ENCODE measurements at regions of chr17 and their contacts with region 1.

Region 1: GRCh38 chr17:45096141-45096540 is 35.0 kb downstream of the NMT1 start:
- DNase-seq: peak; percentile 61
- ATAC-seq: no peak
- H3K4me3 ChIP-seq: no peak overlapping the region
- H3K27ac ChIP-seq: no peak overlapping the region
- H3K4me1 ChIP-seq: peaks cover 21% of the 10 kb centered on the region
- H3K27me3 ChIP-seq: no peaks in the 10 kb centered on the region
- CTCF ChIP-seq: peak; percentile 87

Region 2: GRCh38 chr17:45051060-45051719 is 45.0 kb before region 1 on chr17 and contains the start of gene DCAKD:
- CTCF ChIA-PET with region 1: no interaction called
- POLR2A ChIA-PET with region 1: no interaction called
- intact Hi-C with region 1: loop called (anchors 5 kb)
- DNase-seq: peak; percentile 99
- ATAC-seq: peak; percentile 98
- H3K4me3 ChIP-seq: peak within 1 kb of the TSS; percentile 84
- H3K27ac ChIP-seq: peak within 1 kb of the TSS; percentile 92
- H3K4me1 ChIP-seq: peaks cover 36% of the 10 kb centered on the region
- H3K27me3 ChIP-seq: no peaks in the 10 kb centered on the region
- CTCF ChIP-seq: no peak
- total RNA-seq, gene DCAKD: 56.2 and 59.5 TPM in 2 replicates

Region 3: GRCh38 chr17:45060797-45061605 is 35.1 kb before region 1 on chr17 and contains the start of gene NMT1:
- CTCF ChIA-PET with region 1: interaction called, 4 read pairs
- POLR2A ChIA-PET with region 1: interaction called, 3 read pairs
- intact Hi-C with region 1: loop called (anchors 1 kb)
- DNase-seq: peak; percentile 100
- ATAC-seq: peak; percentile 90
- H3K4me3 ChIP-seq: peak within 1 kb of the TSS; percentile 82
- H3K27ac ChIP-seq: peak within 1 kb of the TSS; percentile 75
- H3K4me1 ChIP-seq: peaks cover 26% of the 10 kb centered on the region
- H3K27me3 ChIP-seq: no peaks in the 10 kb centered on the region
- CTCF ChIP-seq: no peak
- total RNA-seq, gene NMT1: 99.2 and 117 TPM in 2 replicates

Measured in PC-3 (cell line).